K562 (cell line): ENCODE measurements at regions of chr19 and their contacts with region 1.

Region 1: GRCh38 chr19:38387550-38388348 is at the start of gene GGN:
- DNase-seq: peak; percentile 90 to 96 (median 92)
- ATAC-seq: peak; percentile 85
- H3K4me3 ChIP-seq: peak within 1 kb of the TSS; percentile 49
- H3K27ac ChIP-seq: peak within 1 kb of the TSS; percentile 33; the same call in 2 of the 3 replicates
- H3K4me1 ChIP-seq: peaks cover 12 to 60% of the 10 kb centered on the region in 2 experiments; a peak in 4 of 5 replicates
- H3K27me3 ChIP-seq: no peaks in the 10 kb centered on the region
- CTCF ChIP-seq: no peak
- EP300 ChIP-seq: no peak
- POLR2A ChIP-seq: no peak
- RAD21 ChIP-seq: no peak
- polyA plus RNA-seq, gene GGN: not detected

Region 2: GRCh38 chr19:37941782-37942515 is 445.8 kb before region 1 on chr19:
- CTCF ChIA-PET with region 1: no interaction called
- POLR2A ChIA-PET with region 1: no interaction called
- in situ Hi-C with region 1: no loop called
- intact Hi-C with region 1: no loop called
- DNase-seq: no peak
- ATAC-seq: no peak
- H3K4me3 ChIP-seq: no peak overlapping the region
- H3K27ac ChIP-seq: no peak overlapping the region
- H3K4me1 ChIP-seq: peaks cover 8 to 10% of the 10 kb centered on the region in 2 experiments; a peak in 2 of 5 replicates
- H3K27me3 ChIP-seq: no peaks in the 10 kb centered on the region
- CTCF ChIP-seq: no peak
- EP300 ChIP-seq: no peak
- POLR2A ChIP-seq: no peak
- RAD21 ChIP-seq: no peak

Region 3: DNA sequence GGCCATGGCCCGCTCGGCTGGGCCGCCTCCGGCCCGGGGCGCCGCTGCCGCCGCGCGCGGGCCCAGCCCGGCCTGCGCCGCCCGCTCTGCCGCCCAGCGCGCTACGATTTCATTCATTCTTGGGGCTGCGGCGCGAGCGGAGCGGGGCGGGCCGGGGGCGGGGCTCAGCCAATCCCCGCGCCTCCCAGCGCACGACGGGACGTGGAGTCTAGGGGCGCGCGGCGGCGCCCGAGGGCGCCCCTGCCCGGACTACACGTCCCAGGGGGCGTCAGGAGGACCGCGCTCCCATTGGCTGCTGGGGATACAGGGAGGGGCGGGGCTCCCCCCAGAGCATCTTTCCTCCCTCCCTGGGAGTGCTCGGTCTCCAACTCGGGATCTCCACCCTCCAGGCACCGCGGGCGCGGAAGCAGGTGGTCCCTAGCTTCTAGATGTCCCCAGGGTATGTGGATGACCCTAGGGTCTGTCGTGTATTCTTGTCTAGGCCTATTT is 158.1 kb before region 1 on chr19:
- CTCF ChIA-PET with region 1: interaction called, 3 read pairs
- POLR2A ChIA-PET with region 1: interaction called, 11 read pairs
- in situ Hi-C with region 1: no loop called
- intact Hi-C with region 1: no loop called
- DNase-seq: peak; percentile 94 to 99 (median 98)
- ATAC-seq: peak; percentile 97
- H3K4me3 ChIP-seq: no peak overlapping the region; the same call in 1 of the 2 replicates
- H3K27ac ChIP-seq: no peak overlapping the region
- H3K4me1 ChIP-seq: peaks cover 4 to 37% of the 10 kb centered on the region in 2 experiments; a peak in 4 of 5 replicates
- H3K27me3 ChIP-seq: peaks cover 2 to 6% of the 10 kb centered on the region in 2 experiments; a peak in 2 of 5 replicates
- CTCF ChIP-seq: 0 out of 6 replicates have a peak, but pooled peaks of 1 of the 3 experiments have one; percentile 14
- EP300 ChIP-seq: no peak
- POLR2A ChIP-seq: no peak
- RAD21 ChIP-seq: no peak

Region 4: GRCh38 chr19:38239816-38240215 is 147.9 kb before region 1 on chr19:
- CTCF ChIA-PET with region 1: interaction called, 4 read pairs
- POLR2A ChIA-PET with region 1: interaction called, 11 read pairs
- in situ Hi-C with region 1: no loop called
- intact Hi-C with region 1: loop called (anchors 5 kb)
- DNase-seq: no peak
- ATAC-seq: no peak
- H3K4me3 ChIP-seq: no peak overlapping the region
- H3K27ac ChIP-seq: no peak overlapping the region
- H3K4me1 ChIP-seq: peaks cover 5 to 18% of the 10 kb centered on the region in 2 experiments; a peak in 4 of 5 replicates
- H3K27me3 ChIP-seq: no peaks in the 10 kb centered on the region
- CTCF ChIP-seq: no peak
- EP300 ChIP-seq: no peak
- POLR2A ChIP-seq: no peak
- RAD21 ChIP-seq: no peak

Region 5: GRCh38 chr19:38374429-38375176 is 13.1 kb before region 1 on chr19 and contains the start of gene PSMD8:
- CTCF ChIA-PET with region 1: no interaction called
- POLR2A ChIA-PET with region 1: interaction called, 28 read pairs
- in situ Hi-C with region 1: no loop called
- intact Hi-C with region 1: no loop called
- DNase-seq: peak; percentile 97 to 100 (median 98)
- ATAC-seq: peak; percentile 99
- H3K4me3 ChIP-seq: peak within 1 kb of the TSS; percentile 88
- H3K27ac ChIP-seq: peak within 1 kb of the TSS; percentile 94
- H3K4me1 ChIP-seq: peaks cover 10 to 20% of the 10 kb centered on the region in 2 experiments; a peak in 4 of 5 replicates
- H3K27me3 ChIP-seq: no peaks in the 10 kb centered on the region
- CTCF ChIP-seq: peak; percentile 45 to 59 (median 56); a peak in 5 of 6 replicates
- EP300 ChIP-seq: peak; percentile 76
- POLR2A ChIP-seq: peak; percentile 99
- RAD21 ChIP-seq: no peak
- polyA plus RNA-seq, gene PSMD8: 130 to 244 TPM